HEK293 (cell line): ENCODE measurements at regions of chr9 and their contacts with region 1.

Region 1: GRCh38 chr9:27548055-27548741 is 18.6 kb upstream of the MOB3B start:
- H3K4me3 ChIP-seq: no peak overlapping the region
- H3K27ac ChIP-seq: no peak overlapping the region
- H3K4me1 ChIP-seq: no peaks in the 10 kb centered on the region
- CTCF ChIP-seq: 0 out of 2 replicates have a peak, but pooled peaks have one; percentile 29

Region 2: DNA sequence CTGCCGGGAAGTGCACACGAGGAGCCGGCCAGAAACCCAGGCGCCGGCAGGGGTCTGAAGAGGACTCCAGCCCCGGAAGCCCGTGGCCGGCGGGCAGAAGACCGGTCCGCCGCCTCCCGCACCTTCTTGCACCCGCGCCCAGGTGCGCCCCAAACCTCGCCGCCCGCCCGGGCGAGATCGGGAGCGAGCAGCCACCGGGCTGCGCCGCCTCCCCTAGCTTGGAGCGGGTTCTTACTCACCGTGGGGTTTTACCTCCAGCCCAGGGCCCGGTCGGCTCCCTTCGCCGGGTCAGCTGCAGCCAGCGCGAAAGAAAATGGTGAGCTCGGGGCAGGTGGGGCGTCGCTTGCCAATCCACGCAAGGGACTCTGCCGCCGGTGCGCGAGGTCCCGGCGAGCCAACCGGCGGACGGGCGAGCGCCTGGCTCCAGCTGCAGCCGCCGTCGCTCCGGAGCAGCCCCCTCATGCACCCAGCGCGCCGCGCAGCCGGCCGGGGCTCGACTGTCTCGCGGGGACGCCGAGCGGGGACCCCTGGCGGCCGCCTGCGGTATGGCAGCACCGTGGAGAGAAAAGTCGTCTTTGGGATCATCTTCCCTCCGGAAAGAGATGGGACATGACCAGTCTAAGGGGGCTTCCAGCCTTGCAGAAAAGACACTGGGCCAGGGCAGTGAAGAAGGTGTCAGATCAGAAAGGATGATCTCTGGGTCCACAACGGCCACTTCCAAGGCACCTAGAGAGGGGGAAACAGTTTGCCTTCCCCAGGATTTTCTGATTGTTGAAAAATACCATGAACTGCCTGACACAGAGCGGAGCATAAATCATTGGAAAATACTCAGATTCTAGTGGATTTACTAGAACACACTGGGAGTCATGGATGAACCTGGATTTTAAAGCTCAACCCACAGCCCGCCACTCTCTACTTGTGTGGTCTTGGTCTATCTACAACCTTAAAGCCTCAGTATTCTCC is 18.6 kb before region 1 on chr9 and contains the start of gene MOB3B:
- CTCF ChIA-PET with region 1: interaction called, 28 read pairs
- POLR2A ChIA-PET with region 1: no interaction called
- H3K4me3 ChIP-seq: peak within 1 kb of the TSS; percentile 75
- H3K27ac ChIP-seq: peak within 1 kb of the TSS; percentile 85
- H3K4me1 ChIP-seq: no peaks in the 10 kb centered on the region
- CTCF ChIP-seq: peak; percentile 48